Activated naive CD4-positive, alpha-beta T cell treated with anti-CD3 and anti-CD28 coated beads for 36 hours (primary cell): ENCODE measurements at regions of chr18 and their contacts with region 1.

Region 1: GRCh38 chr18:58615140-58616132 is 13.5 kb downstream of the ALPK2 start:
- DNase-seq: peak; percentile 91
- H3K4me3 Mint-ChIP-seq: peak overlapping the region; percentile 40
- H3K27ac Mint-ChIP-seq: peak overlapping the region; percentile 85
- H3K4me1 Mint-ChIP-seq: peaks cover 46% of the 10 kb centered on the region
- H3K27me3 Mint-ChIP-seq: no peaks in the 10 kb centered on the region

Region 2: DNA sequence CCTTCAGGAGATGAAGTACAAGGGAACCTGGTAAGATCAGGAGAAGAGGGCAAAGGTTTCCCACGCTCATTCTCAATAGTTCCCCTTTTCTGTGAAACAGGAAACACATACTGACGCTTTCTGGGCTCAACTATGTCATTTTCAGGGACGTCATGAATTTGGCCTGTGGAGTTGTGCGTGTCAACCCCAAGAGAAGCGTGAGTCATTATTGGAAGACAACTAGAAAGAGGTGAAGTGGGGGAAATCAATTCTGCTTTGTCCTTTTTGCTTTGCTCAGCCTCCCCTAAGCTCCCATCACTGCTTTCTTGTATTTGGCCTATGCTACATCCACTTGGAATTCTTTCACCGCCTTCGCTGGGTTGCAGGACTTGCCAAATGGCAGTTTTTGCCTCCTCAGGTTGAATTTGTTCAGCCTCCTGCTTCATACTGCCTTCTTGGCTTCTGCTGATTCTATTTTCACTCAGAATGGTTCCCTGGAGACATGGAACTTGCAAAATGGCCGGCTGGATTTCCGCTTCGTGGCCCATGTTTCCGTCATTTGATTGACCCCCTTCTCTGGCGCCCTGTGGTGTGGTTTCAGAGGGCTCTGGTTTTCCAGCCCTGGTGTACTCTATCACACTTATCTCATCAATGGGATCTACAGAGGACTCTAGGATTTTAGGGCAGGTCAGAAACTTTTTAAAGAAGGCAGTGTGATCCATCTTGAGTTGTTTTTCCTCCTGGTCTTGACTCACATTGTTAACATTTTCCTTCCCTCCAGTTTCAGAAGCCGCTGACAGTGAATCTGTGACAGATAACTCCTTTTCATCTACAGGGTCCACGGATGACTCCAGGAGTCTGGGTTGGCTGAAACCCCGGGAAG is 79.9 kb before region 1 on chr18:
- CTCF ChIA-PET with region 1: interaction called, 3 read pairs
- intact Hi-C with region 1: loop called (anchors 1 kb)
- DNase-seq: peak; percentile 75
- H3K4me3 Mint-ChIP-seq: no peak overlapping the region
- H3K27ac Mint-ChIP-seq: peak overlapping the region; percentile 21
- H3K4me1 Mint-ChIP-seq: peaks cover 46% of the 10 kb centered on the region
- H3K27me3 Mint-ChIP-seq: no peaks in the 10 kb centered on the region

Region 3: GRCh38 chr18:58578835-58579560 is 36.4 kb before region 1 on chr18:
- CTCF ChIA-PET with region 1: no interaction called
- intact Hi-C with region 1: loop called (anchors 2 kb)
- DNase-seq: peak; percentile 33
- H3K4me3 Mint-ChIP-seq: peak overlapping the region; percentile 55
- H3K27ac Mint-ChIP-seq: peak overlapping the region; percentile 14
- H3K4me1 Mint-ChIP-seq: peaks cover 24% of the 10 kb centered on the region
- H3K27me3 Mint-ChIP-seq: peaks cover 2% of the 10 kb centered on the region

Region 4: GRCh38 chr18:58649966-58650816 is 34.8 kb after region 1 on chr18:
- CTCF ChIA-PET with region 1: interaction called, 3 read pairs
- intact Hi-C with region 1: loop called (anchors 1 kb)
- DNase-seq: peak; percentile 78
- H3K4me3 Mint-ChIP-seq: no peak overlapping the region
- H3K27ac Mint-ChIP-seq: no peak overlapping the region
- H3K4me1 Mint-ChIP-seq: peaks cover 59% of the 10 kb centered on the region
- H3K27me3 Mint-ChIP-seq: no peaks in the 10 kb centered on the region

Region 5: DNA sequence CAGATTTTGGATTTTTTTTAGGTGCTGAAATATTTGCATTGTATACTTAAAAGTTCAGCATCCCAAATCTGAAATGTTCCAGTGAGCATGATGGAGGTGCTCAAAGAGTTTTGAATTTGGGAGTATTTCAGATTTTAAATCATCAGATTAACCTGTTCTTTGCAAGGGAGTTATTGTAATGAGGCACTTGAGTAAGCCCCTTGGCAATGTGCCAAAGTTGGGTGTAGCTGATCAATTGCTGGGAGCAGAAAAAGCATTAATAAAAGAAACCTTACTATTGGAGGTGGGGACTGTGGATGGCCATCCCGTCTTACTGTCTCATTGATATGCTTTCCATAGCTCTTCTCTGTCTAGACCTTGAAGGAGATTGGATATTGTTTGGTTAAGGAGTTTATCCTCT is 84.1 kb after region 1 on chr18:
- CTCF ChIA-PET with region 1: no interaction called
- intact Hi-C with region 1: loop called (anchors 1 kb)
- DNase-seq: no peak
- H3K4me3 Mint-ChIP-seq: no peak overlapping the region
- H3K27ac Mint-ChIP-seq: no peak overlapping the region
- H3K4me1 Mint-ChIP-seq: peaks cover 50% of the 10 kb centered on the region
- H3K27me3 Mint-ChIP-seq: no peaks in the 10 kb centered on the region

Region 6: GRCh38 chr18:59478591-59478990 is 863.2 kb after region 1 on chr18:
- CTCF ChIA-PET with region 1: no interaction called
- intact Hi-C with region 1: no loop called
- DNase-seq: no peak
- H3K4me3 Mint-ChIP-seq: no peak overlapping the region
- H3K27ac Mint-ChIP-seq: no peak overlapping the region
- H3K4me1 Mint-ChIP-seq: no peaks in the 10 kb centered on the region
- H3K27me3 Mint-ChIP-seq: peaks cover 21% of the 10 kb centered on the region